T-cell (primary cell): ENCODE measurements at regions of chr14 and their contacts with region 1.

Region 1: DNA sequence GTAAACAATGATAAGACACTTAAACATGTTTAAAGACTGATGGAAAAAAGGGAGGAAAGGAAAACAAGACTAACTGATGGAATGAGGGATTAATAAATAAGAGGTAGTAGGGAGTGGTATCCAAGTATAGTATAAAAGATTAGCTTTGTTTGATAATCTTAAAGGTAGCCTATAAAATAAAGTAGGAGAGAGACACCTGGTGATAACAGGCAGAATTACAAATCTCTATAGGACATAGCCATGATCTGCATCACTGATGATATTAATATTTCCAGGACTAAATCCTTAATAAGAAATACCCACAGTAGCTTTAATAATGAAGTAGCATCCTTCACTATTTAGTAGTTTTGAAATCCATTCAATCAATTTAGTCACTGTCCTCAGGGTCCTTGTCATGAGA is 30.4 kb downstream of the DLGAP5 start:
- DNase-seq: peak in 1 of 35 experiments; percentile 63
- ATAC-seq: peak; percentile 58 to 73 (median 69)
- H3K4me3 ChIP-seq: no peak overlapping the region
- H3K4me3 Mint-ChIP-seq: no peak overlapping the region
- H3K27ac ChIP-seq: no peak overlapping the region
- H3K27ac Mint-ChIP-seq: no peak overlapping the region
- H3K4me1 ChIP-seq: peaks cover 0 to 2% of the 10 kb centered on the region in 2 experiments
- H3K4me1 Mint-ChIP-seq: peaks cover 9 to 18% (median 14%) of the 10 kb centered on the region in 3 donors
- H3K27me3 ChIP-seq: no peaks in the 10 kb centered on the region
- H3K27me3 Mint-ChIP-seq: no peaks in the 10 kb centered on the region

Region 2: GRCh38 chr14:54857830-54858269 is 303.1 kb before region 1 on chr14:
- CTCF ChIA-PET with region 1: no interaction called
- POLR2A ChIA-PET with region 1: no interaction called
- DNase-seq: no peak
- ATAC-seq: no peak
- H3K4me3 ChIP-seq: no peak overlapping the region
- H3K4me3 Mint-ChIP-seq: no peak overlapping the region
- H3K27ac ChIP-seq: no peak overlapping the region
- H3K27ac Mint-ChIP-seq: peak overlapping the region in 1 of 2 donors; percentile 39
- H3K4me1 ChIP-seq: peaks cover 0 to 4% of the 10 kb centered on the region in 2 experiments
- H3K4me1 Mint-ChIP-seq: peaks cover 20 to 31% (median 22%) of the 10 kb centered on the region in 3 donors
- H3K27me3 ChIP-seq: no peaks in the 10 kb centered on the region
- H3K27me3 Mint-ChIP-seq: no peaks in the 10 kb centered on the region

Region 3: DNA sequence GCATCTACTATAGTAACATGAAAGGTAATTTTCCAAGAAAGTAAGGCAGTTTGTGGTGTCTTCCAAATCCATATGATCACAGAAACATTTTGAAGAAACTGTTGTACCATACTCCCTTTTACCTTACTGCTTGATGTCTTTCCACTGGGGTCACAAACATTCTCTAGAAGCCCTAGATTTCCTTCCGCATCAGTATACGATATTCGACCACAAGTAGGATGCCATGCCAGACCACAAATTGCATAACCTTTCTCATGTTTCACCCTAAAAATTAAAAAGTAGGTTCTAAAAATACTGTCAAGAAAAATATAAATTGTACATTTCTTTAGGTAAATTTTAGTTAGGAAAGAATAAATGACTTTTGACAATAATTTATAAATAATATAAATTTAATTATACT is 160.6 kb before region 1 on chr14:
- CTCF ChIA-PET with region 1: no interaction called
- POLR2A ChIA-PET with region 1: interaction called in 1 of 2 experiments, 10 read pairs
- DNase-seq: peak in 1 of 35 experiments; percentile 8
- ATAC-seq: peak in 1 of 4 experiments; percentile 37
- H3K4me3 ChIP-seq: no peak overlapping the region
- H3K4me3 Mint-ChIP-seq: no peak overlapping the region
- H3K27ac ChIP-seq: no peak overlapping the region
- H3K27ac Mint-ChIP-seq: no peak overlapping the region
- H3K4me1 ChIP-seq: no peaks in the 10 kb centered on the region
- H3K4me1 Mint-ChIP-seq: peaks cover 0 to 7% (median 0%) of the 10 kb centered on the region in 3 donors
- H3K27me3 ChIP-seq: no peaks in the 10 kb centered on the region
- H3K27me3 Mint-ChIP-seq: no peaks in the 10 kb centered on the region

Region 4: DNA sequence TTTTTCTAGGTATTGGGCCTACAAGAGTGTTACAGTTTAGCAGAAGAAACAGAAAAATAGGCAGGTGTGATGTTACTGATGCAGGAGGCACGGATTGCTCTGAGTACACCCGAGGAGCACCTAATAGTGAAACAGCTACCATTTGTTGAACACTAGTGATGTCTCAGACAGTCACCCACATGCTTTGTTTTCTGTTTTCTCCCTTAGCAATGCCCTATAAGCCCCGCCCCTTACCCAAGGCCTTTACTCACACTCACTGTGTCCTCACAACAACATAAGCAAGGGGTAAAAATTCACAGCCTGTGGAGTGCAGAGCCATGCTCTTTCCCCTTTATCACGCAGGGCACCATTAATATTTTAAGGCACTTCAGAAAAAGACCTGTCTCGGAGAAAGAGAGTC is 83.8 kb before region 1 on chr14:
- CTCF ChIA-PET with region 1: interaction called, 4 to 11 read pairs
- POLR2A ChIA-PET with region 1: no interaction called
- DNase-seq: peak in 1 of 35 experiments; percentile 10
- ATAC-seq: no peak
- H3K4me3 ChIP-seq: no peak overlapping the region
- H3K4me3 Mint-ChIP-seq: no peak overlapping the region
- H3K27ac ChIP-seq: no peak overlapping the region
- H3K27ac Mint-ChIP-seq: no peak overlapping the region
- H3K4me1 ChIP-seq: peaks cover 3 to 11% of the 10 kb centered on the region in 2 experiments
- H3K4me1 Mint-ChIP-seq: peaks cover 27 to 35% (median 31%) of the 10 kb centered on the region in 3 donors
- H3K27me3 ChIP-seq: peaks cover 0 to 2% of the 10 kb centered on the region in 2 experiments
- H3K27me3 Mint-ChIP-seq: no peaks in the 10 kb centered on the region

Region 5: DNA sequence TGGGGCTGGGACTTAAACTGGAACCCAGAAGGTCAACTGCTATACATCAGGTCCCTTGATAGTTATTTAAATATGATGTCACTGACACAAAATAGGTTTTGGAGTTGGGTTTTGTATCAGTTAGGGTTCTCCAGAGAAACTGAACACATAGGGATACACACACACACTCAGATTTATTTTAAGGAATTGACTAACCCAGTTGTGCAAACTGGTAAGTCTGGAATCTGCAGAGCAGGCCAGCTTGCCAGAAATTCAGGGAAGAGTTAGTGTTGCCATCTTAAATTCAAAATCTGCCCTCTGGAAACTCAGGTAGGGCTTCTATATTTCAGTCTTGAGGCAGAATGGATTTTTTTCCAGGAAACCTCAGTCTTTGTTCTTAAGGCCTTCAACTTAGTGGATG is 72.6 kb before region 1 on chr14:
- CTCF ChIA-PET with region 1: interaction called, 16 to 40 read pairs
- POLR2A ChIA-PET with region 1: interaction called in 1 of 2 experiments, 10 read pairs
- DNase-seq: no peak
- ATAC-seq: no peak
- H3K4me3 ChIP-seq: no peak overlapping the region
- H3K4me3 Mint-ChIP-seq: no peak overlapping the region
- H3K27ac ChIP-seq: no peak overlapping the region
- H3K27ac Mint-ChIP-seq: no peak overlapping the region
- H3K4me1 ChIP-seq: peaks cover 0 to 4% of the 10 kb centered on the region in 2 experiments
- H3K4me1 Mint-ChIP-seq: peaks cover 0 to 3% (median 2%) of the 10 kb centered on the region in 3 donors
- H3K27me3 ChIP-seq: no peaks in the 10 kb centered on the region
- H3K27me3 Mint-ChIP-seq: no peaks in the 10 kb centered on the region

Region 6: GRCh38 chr14:55094321-55095157 is 66.5 kb before region 1 on chr14:
- CTCF ChIA-PET with region 1: interaction called, 16 to 40 read pairs
- POLR2A ChIA-PET with region 1: interaction called in 1 of 2 experiments, 10 read pairs
- DNase-seq: no peak
- ATAC-seq: no peak
- H3K4me3 ChIP-seq: no peak overlapping the region
- H3K4me3 Mint-ChIP-seq: no peak overlapping the region
- H3K27ac ChIP-seq: no peak overlapping the region
- H3K27ac Mint-ChIP-seq: no peak overlapping the region
- H3K4me1 ChIP-seq: peaks cover 0 to 17% of the 10 kb centered on the region in 2 experiments
- H3K4me1 Mint-ChIP-seq: peaks cover 9 to 20% (median 20%) of the 10 kb centered on the region in 3 donors
- H3K27me3 ChIP-seq: no peaks in the 10 kb centered on the region
- H3K27me3 Mint-ChIP-seq: no peaks in the 10 kb centered on the region

Region 7: GRCh38 chr14:55131370-55132137 is 29.4 kb before region 1 on chr14:
- CTCF ChIA-PET with region 1: interaction called in 1 of 2 experiments, 10 read pairs
- POLR2A ChIA-PET with region 1: no interaction called
- DNase-seq: peak in 1 of 35 experiments; percentile 31
- ATAC-seq: no peak
- H3K4me3 ChIP-seq: no peak overlapping the region
- H3K4me3 Mint-ChIP-seq: peak overlapping the region; percentile 5 to 27 (median 13)
- H3K27ac ChIP-seq: no peak overlapping the region
- H3K27ac Mint-ChIP-seq: peak overlapping the region in 1 of 2 donors; percentile 5
- H3K4me1 ChIP-seq: peaks cover 0 to 11% of the 10 kb centered on the region in 2 experiments
- H3K4me1 Mint-ChIP-seq: peaks cover 10 to 31% (median 19%) of the 10 kb centered on the region in 3 donors
- H3K27me3 ChIP-seq: peaks cover 9 to 11% of the 10 kb centered on the region in 2 experiments
- H3K27me3 Mint-ChIP-seq: peaks cover 8 to 32% of the 10 kb centered on the region in 2 donors

Region 8: GRCh38 chr14:55309761-55310365 is 148.9 kb after region 1 on chr14:
- CTCF ChIA-PET with region 1: no interaction called
- POLR2A ChIA-PET with region 1: no interaction called
- DNase-seq: no peak
- ATAC-seq: no peak
- H3K4me3 ChIP-seq: no peak overlapping the region
- H3K4me3 Mint-ChIP-seq: no peak overlapping the region
- H3K27ac ChIP-seq: no peak overlapping the region
- H3K27ac Mint-ChIP-seq: no peak overlapping the region
- H3K4me1 ChIP-seq: peaks cover 0 to 3% of the 10 kb centered on the region in 2 experiments
- H3K4me1 Mint-ChIP-seq: peaks cover 13 to 45% (median 36%) of the 10 kb centered on the region in 3 donors
- H3K27me3 ChIP-seq: no peaks in the 10 kb centered on the region
- H3K27me3 Mint-ChIP-seq: no peaks in the 10 kb centered on the region